ENCODE measurements at regions of chr19 and their contacts with region 1.

Region 1: DNA sequence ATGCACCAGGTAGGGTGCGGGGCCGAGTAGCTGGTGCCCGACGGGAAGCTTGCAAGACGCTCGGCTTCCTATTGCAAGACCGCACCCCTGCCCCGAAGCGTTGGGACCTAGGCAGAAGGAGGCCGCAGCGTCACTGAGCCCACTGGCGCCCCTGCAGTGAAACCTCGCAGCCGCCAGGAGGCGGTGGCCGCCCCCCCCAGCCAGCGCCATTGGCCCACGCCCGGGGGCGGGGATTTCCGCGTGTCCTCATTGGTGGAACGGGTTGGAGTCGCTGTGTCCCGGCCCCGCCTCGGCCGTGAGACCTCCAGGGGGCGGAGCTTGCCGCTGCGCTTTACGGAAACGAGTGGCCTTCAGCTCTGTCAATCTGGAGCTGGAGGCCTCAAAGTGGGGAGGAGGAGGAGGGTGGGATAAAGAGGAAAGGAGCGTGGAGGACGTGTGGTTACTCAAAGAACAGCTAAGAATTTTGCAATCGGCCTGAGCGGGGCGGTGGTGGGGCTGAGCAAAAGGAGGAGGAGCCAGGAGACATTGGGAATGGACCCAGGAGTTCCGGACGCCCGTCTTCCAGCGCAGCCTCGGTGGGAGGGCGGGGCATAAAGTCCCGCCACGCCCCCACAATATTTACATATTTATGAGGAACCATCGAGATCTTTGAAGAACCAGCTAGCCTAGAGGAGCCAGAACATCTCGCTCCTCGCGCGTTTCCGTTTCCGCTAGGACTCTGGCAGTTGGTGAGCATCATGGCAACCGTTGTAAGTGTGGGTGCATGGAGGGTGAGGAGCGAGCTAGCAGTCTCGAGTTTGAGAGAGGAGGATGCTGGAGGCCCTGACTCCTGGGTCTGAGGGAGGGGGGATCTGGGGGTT is at the starts of genes GYS1 and RUVBL2:
- DNase-seq: peak; percentile 100
- H3K4me3 ChIP-seq: peak within 1 kb of the TSS; percentile 79
- H3K27ac ChIP-seq: peak within 1 kb of the TSS; percentile 85
- H3K4me1 ChIP-seq: peaks cover 14% of the 10 kb centered on the region
- H3K27me3 ChIP-seq: no peaks in the 10 kb centered on the region
- CTCF ChIP-seq: peak; percentile 98
- total RNA-seq, gene GYS1: 54.6 and 57.0 TPM in 2 replicates
- total RNA-seq, gene RUVBL2: 227 and 241 TPM in 2 replicates

Region 2: DNA sequence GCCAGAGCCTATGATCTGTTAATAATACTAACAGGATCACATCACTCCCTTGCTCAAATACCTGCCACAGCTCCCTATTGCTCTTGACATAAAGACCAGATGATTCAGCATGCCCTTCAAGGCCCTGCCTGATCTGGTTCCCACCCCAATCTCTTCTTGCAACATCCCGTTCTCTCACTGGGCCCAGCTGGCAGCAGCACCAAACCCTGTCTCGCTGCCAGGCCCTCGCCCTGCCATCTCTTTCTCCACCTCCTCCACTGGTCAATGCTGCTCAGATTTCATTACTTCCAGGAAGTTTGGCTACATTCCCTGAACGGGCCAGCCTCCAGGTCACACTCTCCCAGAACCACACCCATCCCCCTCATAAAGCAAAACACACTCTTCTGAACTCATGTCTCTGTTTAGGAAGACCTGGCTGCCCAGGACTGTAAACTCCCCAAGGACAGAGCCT is 174.0 kb before region 1 on chr19:
- CTCF ChIA-PET with region 1: no interaction called
- POLR2A ChIA-PET with region 1: no interaction called
- intact Hi-C with region 1: no loop called
- DNase-seq: no peak
- H3K4me3 ChIP-seq: no peak overlapping the region
- H3K27ac ChIP-seq: no peak overlapping the region
- H3K4me1 ChIP-seq: no peaks in the 10 kb centered on the region
- H3K27me3 ChIP-seq: no peaks in the 10 kb centered on the region
- CTCF ChIP-seq: no peak

Region 3: DNA sequence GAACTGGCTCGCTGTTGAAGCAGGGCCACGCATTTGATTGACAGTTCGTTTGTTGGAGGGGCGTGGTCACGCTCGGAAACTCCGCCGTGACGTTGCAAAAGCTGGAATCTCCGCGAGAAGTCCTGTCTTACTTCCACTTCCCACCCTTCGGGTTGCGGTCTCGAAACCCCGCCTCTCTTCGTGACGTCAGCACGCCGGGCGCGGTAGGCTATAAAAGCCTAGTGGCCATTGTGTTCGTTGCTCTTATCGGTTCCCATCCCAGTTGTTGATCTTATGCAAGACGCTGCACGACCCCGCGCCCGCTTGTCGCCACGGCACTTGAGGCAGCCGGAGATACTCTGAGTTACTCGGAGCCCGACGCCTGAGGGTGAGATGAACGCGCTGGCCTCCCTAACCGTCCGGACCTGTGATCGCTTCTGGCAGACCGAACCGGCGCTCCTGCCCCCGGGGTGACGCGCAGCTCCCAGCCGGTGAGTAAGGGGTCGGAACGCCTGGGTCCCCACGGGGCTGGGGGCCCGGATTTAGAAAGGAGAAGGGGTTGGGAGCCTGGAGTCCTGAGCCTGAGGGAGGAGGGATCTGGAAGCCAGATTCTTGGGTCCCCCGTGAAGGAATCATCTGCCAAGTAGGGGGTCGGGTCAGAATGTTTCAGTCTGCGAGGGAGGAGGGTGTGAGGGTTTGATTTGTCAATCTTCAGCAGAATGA is 121.1 kb before region 1 on chr19 and contains the start of gene PPP1R15A:
- CTCF ChIA-PET with region 1: no interaction called
- POLR2A ChIA-PET with region 1: no interaction called
- intact Hi-C with region 1: no loop called
- DNase-seq: peak; percentile 98
- H3K4me3 ChIP-seq: peak within 1 kb of the TSS; percentile 91
- H3K27ac ChIP-seq: peak within 1 kb of the TSS; percentile 99
- H3K4me1 ChIP-seq: peaks cover 46% of the 10 kb centered on the region
- H3K27me3 ChIP-seq: no peaks in the 10 kb centered on the region
- CTCF ChIP-seq: no peak
- total RNA-seq, gene PPP1R15A: 27.6 and 41.2 TPM in 2 replicates

Region 4: GRCh38 chr19:48887861-48888612 is 105.4 kb before region 1 on chr19:
- CTCF ChIA-PET with region 1: no interaction called
- POLR2A ChIA-PET with region 1: no interaction called
- intact Hi-C with region 1: no loop called
- DNase-seq: no peak
- H3K4me3 ChIP-seq: no peak overlapping the region
- H3K27ac ChIP-seq: no peak overlapping the region
- H3K4me1 ChIP-seq: no peaks in the 10 kb centered on the region
- H3K27me3 ChIP-seq: no peaks in the 10 kb centered on the region
- CTCF ChIP-seq: no peak

Region 5: DNA sequence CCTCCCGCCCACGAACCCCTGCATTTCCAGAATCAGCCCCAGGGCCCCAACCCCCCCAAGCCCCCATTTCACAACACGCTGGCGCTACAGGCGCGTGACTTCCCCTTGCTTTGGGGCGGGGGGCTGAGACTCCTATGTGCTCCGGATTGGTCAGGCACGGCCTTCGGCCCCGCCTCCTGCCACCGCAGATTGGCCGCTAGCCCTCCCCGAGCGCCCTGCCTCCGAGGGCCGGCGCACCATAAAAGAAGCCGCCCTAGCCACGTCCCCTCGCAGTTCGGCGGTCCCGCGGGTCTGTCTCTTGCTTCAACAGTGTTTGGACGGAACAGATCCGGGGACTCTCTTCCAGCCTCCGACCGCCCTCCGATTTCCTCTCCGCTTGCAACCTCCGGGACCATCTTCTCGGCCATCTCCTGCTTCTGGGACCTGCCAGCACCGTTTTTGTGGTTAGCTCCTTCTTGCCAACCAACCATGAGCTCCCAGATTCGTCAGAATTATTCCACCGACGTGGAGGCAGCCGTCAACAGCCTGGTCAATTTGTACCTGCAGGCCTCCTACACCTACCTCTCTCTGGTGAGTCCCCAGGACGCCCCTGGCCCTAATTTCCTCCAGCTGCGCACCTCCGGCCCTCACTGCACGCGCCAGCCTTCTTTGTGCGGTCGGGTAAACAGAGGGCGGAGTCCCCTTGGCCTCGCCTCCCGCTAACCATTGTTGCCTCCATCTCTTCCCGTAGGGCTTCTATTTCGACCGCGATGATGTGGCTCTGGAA is 28.2 kb before region 1 on chr19 and contains the start of gene FTL:
- CTCF ChIA-PET with region 1: interaction called, 14 read pairs
- POLR2A ChIA-PET with region 1: no interaction called
- intact Hi-C with region 1: no loop called
- DNase-seq: peak; percentile 97
- H3K4me3 ChIP-seq: peak within 1 kb of the TSS; percentile 77
- H3K27ac ChIP-seq: peak within 1 kb of the TSS; percentile 95
- H3K4me1 ChIP-seq: peaks cover 42% of the 10 kb centered on the region
- H3K27me3 ChIP-seq: no peaks in the 10 kb centered on the region
- CTCF ChIP-seq: no peak
- total RNA-seq, gene FTL: 1,330 and 1,983 TPM in 2 replicates

Region 6: GRCh38 chr19:48970923-48971395 is 22.4 kb before region 1 on chr19:
- CTCF ChIA-PET with region 1: interaction called, 14 read pairs
- POLR2A ChIA-PET with region 1: no interaction called
- intact Hi-C with region 1: no loop called
- DNase-seq: peak; percentile 92
- H3K4me3 ChIP-seq: no peak overlapping the region
- H3K27ac ChIP-seq: no peak overlapping the region
- H3K4me1 ChIP-seq: peaks cover 29% of the 10 kb centered on the region
- H3K27me3 ChIP-seq: no peaks in the 10 kb centered on the region
- CTCF ChIP-seq: peak; percentile 96

Region 7: GRCh38 chr19:48975947-48976847 is 17.2 kb before region 1 on chr19:
- CTCF ChIA-PET with region 1: interaction called, 14 read pairs
- POLR2A ChIA-PET with region 1: interaction called, 14 read pairs
- intact Hi-C with region 1: no loop called
- DNase-seq: peak; percentile 76
- H3K4me3 ChIP-seq: no peak overlapping the region
- H3K27ac ChIP-seq: no peak overlapping the region
- H3K4me1 ChIP-seq: no peaks in the 10 kb centered on the region
- H3K27me3 ChIP-seq: no peaks in the 10 kb centered on the region
- CTCF ChIP-seq: no peak

Region 8: DNA sequence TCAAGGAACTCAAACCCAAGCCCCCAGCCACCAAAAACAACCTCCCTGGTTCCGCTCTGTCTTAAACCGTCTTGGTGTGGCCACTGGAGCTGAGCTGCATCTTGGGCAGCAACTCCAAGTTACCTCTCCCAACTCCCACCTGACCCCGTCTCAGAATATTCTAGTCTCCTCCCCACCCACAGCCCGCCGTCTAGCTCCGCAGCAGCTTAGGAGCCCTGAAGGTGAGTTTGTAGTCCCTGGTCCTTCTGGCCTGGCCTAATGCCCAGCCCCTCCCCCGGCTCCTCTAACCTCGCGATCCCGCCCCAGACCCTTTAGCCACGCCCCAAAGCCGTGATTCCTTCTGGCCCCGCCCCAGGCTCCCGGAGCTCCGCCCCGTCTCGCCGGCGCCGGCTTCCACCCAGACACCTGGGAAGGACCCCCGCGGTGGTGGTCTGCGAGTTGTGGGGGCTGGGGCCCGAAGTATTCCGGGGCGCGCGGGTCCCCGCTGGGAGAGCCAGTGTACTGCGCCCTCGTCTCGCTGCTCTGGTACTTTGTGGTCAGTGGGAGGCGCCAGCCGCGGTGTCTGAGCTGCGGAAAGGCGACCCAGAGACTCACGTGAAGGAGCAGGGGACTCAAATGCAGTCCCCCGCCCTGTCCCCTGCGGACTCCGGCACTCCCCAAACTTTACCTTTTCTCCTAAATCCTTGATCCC is 26.0 kb after region 1 on chr19:
- CTCF ChIA-PET with region 1: interaction called, 10 read pairs
- POLR2A ChIA-PET with region 1: no interaction called
- intact Hi-C with region 1: no loop called
- DNase-seq: peak; percentile 51
- H3K4me3 ChIP-seq: peak overlapping the region; percentile 49
- H3K27ac ChIP-seq: no peak overlapping the region
- H3K4me1 ChIP-seq: peaks cover 15% of the 10 kb centered on the region
- H3K27me3 ChIP-seq: no peaks in the 10 kb centered on the region
- CTCF ChIP-seq: peak; percentile 48

Region 9: DNA sequence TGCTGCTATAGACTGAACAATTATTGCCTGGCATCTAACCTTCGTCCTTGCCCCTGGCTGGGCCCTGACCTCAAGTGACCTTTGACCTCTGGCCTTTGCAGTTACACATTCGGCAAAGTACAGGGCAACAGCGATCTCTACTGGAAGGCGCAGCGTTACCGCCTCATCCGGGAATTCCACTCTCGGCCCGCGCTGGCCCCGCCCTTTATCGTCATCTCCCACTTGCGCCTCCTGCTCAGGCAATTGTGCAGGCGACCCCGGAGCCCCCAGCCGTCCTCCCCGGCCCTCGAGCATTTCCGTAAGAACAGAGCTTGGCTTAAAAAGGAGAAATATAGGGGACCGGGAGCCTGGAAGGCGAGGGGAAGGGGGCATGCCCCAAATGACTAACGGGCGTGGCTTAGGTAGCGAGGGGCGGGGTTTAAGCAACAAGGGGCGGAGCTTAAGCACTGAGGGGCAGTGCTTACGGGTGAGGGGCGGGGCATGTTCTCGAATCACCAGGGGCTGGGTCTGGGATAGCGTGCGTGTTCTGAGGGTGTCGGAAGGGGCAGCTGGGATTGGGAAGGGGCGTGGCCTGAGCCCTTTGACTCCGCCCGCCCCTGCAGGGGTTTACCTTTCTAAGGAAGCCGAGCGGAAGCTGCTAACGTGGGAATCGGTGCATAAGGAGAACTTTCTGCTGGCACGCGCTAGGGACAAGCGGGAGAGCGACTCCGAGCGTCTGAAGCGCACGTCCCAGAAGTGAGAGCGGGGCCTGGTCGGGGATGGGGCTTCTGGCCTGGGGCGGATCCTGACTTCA is 216.9 kb after region 1 on chr19:
- CTCF ChIA-PET with region 1: no interaction called
- POLR2A ChIA-PET with region 1: interaction called, 3 read pairs
- intact Hi-C with region 1: loop called (anchors 5 kb)
- DNase-seq: peak; percentile 96
- H3K4me3 ChIP-seq: peak overlapping the region; percentile 67
- H3K27ac ChIP-seq: peak overlapping the region; percentile 99
- H3K4me1 ChIP-seq: peaks cover 32% of the 10 kb centered on the region
- H3K27me3 ChIP-seq: no peaks in the 10 kb centered on the region
- CTCF ChIP-seq: 0 out of 2 replicates have a peak, but pooled peaks have one; percentile 12

Region 10: DNA sequence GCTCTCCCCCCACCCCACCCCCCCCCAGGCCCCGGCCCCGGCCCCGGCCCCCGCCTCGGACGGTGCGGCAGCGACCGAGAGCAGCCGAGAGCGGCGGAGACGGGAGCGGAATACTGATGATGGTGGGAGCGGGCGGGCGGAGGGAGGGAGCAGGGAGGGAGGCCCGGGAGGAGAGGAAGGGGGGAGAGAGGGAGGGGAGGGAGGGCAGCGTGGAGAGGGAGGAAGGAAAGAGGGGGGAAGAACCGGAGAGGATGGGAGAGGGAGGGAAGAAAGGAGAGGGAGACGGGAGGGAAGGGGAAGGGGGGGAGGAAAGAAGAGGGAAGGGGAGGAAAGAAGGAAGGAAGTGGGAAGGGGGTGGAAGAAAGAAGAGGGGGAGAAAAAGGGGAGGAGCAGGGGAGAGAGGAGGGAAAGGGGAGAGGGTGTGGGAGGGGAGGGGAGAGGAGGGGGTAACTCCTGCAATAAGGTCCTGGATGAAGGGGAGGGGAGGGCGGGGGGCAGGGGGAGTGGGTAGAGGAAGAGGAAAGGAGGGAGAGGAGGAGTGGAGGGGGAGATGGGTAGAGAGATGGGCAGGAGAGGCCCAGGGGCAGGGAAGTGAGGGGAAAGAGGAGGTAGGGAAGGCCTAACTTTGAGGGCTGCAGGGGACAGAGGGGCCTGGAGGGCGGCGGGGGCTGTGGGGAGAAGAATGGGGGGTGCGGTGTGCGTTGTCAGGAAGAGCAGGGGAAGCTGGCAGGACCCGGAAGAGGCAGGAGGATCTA is 1575.1 kb after region 1 on chr19 and contains the start of gene LRRC4B:
- CTCF ChIA-PET with region 1: no interaction called
- POLR2A ChIA-PET with region 1: no interaction called
- intact Hi-C with region 1: no loop called
- DNase-seq: peak; percentile 70
- H3K4me3 ChIP-seq: peak within 1 kb of the TSS; percentile 56
- H3K27ac ChIP-seq: no peak within 1 kb of the TSS
- H3K4me1 ChIP-seq: peaks cover 14% of the 10 kb centered on the region
- H3K27me3 ChIP-seq: peaks cover 4% of the 10 kb centered on the region
- CTCF ChIP-seq: no peak
- total RNA-seq, gene LRRC4B: 23.1 and 24.9 TPM in 2 replicates

Measured in A673 (cell line).